ENCODE measurements at regions of chr11 and their contacts with region 1.

Region 1: DNA sequence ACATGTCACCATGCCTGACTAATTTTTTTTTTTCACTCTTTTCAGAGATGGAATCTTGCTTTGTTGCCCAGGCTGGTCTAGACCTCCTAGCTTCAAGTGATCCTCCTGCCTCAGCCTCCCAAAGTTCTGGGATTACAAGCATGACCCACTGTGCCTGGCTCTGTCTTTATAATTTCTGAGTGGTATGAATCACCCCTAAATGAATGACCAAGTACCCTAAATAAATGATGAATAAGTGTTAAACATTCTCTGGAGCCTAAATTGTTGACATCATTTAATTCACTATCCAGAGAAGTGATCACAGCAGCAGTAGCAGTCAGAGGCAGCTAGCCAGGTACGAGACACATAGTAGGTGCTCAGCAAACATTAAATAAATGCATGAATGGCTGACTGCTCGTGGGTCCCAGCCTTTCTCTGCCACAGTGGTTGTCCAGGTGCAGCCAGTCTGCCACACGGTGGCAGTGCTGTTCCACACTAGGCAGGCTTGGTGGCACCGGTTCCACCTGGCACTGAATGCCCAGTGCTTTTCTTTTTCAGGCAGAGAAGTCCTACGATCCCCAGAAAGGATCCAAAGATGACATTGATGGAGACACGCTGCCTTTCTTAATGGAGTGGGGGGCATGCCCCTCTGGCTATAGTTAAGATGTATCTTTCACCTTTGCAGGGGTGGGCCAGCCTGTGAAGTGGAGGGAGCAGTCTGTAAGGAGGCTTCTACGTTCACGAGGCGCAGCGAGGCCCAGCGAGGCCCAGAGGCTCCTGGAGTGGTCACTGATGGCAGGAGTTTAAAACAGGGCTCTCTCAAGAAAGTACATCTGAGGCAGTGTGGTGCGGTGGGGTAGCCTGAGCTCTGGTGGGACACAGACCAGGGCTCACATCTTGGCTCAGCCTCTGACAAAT is 8.7 kb upstream of the TTC12 start:
- DNase-seq: peak; percentile 79
- ATAC-seq: peak; percentile 98
- H3K4me3 Mint-ChIP-seq: no peak overlapping the region
- H3K27ac Mint-ChIP-seq: no peak overlapping the region
- H3K4me1 Mint-ChIP-seq: peaks cover 1% of the 10 kb centered on the region
- H3K27me3 Mint-ChIP-seq: peaks cover 13% of the 10 kb centered on the region

Region 2: GRCh38 chr11:113419454-113420003 is 113.8 kb after region 1 on chr11:
- CTCF ChIA-PET with region 1: no interaction called
- DNase-seq: no peak
- ATAC-seq: no peak
- H3K4me3 Mint-ChIP-seq: no peak overlapping the region
- H3K27ac Mint-ChIP-seq: no peak overlapping the region
- H3K4me1 Mint-ChIP-seq: peaks cover 18% of the 10 kb centered on the region
- H3K27me3 Mint-ChIP-seq: peaks cover 8% of the 10 kb centered on the region

Region 3: GRCh38 chr11:113532697-113533424 is 227.2 kb after region 1 on chr11:
- CTCF ChIA-PET with region 1: interaction called, 17 read pairs
- DNase-seq: peak; percentile 63
- ATAC-seq: peak; percentile 58
- H3K4me3 Mint-ChIP-seq: no peak overlapping the region
- H3K27ac Mint-ChIP-seq: no peak overlapping the region
- H3K4me1 Mint-ChIP-seq: no peaks in the 10 kb centered on the region
- H3K27me3 Mint-ChIP-seq: peaks cover 66% of the 10 kb centered on the region

Region 4: DNA sequence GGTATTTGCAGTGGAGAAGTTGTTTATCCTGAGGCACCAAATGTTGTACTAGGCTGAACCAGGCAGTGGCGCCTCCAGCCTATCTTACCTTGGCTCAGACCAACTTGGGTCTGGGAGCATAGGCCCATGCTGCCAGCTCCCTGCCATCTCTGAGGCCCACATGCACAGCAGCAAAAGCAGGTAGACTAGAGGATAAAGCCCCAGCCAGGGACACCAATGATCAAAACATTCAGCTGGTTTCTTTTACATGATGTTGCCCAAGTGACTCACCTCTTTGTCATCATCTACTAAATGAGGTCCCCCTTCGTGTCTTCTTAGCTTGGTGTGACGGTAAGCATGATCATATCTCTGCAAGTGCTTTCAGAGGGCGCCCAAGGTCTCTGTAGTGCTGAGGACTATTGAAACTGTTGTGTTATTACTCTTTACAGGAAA is 281.6 kb after region 1 on chr11:
- CTCF ChIA-PET with region 1: no interaction called
- DNase-seq: peak; percentile 89
- ATAC-seq: peak; percentile 98
- H3K4me3 Mint-ChIP-seq: peak overlapping the region; percentile 0
- H3K27ac Mint-ChIP-seq: peak overlapping the region; percentile 97
- H3K4me1 Mint-ChIP-seq: peaks cover 79% of the 10 kb centered on the region
- H3K27me3 Mint-ChIP-seq: no peaks in the 10 kb centered on the region